ENCODE measurements at regions of chr3 and their contacts with region 1.

Region 1: DNA sequence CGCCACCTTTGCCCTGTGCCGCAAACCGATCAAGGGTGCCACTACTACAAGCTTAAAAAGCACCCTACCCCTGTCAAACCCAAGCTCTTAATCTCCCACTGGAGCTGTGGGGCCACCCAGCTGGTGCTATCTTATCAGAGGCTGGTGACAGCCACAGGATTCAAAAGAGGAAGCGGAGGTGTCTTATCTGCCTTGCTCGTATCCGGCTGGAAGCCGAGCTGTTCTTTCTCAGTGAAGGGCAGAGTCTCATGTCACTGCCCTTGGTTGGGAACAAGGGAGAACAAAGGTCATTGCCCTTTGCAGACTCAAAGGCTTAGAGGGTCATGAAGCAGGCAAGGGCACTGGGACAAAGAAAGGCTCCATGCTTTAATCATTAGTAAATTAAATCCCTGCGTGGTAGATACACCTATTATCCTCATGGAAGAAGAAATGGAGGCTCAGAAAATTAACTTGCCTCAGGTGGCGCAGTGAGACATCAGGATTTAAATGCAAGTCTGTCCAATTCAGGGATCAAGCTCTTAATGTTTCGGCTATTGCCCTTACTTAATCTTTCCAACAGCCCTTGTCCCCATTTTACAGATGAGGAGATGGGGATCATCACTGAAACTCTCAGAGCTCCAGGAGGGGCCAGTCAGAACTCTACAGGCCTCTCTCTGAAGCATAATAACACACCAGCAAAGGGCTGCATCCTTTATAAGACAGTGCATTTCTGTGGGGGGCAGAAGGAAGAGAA is 360.0 kb upstream of the PROK2 start:
- DNase-seq: no peak

Region 2: DNA sequence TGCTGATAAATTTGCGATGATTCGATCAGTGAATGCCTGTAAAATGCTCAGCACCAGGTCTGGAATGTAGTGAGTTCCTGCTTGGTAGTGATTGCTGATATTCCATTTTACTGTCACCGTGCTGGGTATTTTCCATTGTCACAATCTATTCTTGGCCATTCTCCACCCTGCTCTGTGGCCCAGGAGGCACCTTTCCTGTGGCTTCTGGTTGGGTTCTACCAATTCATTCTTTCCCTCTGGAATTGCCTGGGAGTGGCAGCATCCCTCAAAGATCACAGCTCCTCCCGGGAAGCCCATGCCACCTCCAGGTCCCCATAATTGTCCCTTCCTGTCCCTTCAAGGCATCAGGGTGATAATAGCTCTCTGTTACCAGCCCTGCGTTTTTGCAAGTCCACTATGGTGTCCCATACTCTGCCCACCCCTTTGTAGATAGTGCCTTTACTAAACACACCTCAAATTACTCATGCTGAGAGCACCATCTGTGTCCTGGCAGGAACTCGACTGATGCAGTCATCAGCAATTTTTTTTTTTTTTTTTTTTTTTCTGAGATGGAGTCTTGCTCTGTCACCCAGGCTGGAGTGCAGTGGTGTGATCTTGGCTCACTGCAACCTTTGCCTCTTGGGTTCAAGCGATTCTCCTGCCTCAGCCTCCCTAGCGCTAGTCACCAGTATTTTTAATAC is 182.2 kb before region 1 on chr3:
- intact Hi-C with region 1: loop called (anchors 10 kb)
- DNase-seq: no peak